Breast epithelium (tissue), 4 donors: ENCODE measurements at regions of chr7 and their contacts with region 1.

Region 1: DNA sequence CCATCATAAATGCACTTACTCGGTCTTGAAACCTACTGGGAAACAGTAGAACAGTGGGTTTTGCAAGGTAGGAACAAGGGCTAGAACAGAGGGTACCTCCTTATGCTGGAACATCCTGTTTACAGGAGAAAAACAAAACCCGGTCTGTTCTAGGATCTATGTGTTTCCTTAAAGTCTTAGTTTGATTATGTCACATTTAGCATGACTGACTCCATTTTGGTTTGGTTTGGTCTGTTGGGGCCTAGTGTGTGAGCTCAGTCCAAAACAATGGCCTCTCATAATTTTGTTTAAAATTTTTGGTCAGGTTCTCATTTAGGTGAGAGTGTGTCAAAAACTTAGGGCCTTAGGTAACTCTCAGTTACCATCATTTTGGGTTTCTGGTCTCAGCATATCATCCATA is 96.3 kb upstream of the TRIM24 start:
- DNase-seq: no peak
- H3K4me3 ChIP-seq: no peak overlapping the region
- H3K27ac ChIP-seq: no peak overlapping the region
- H3K4me1 ChIP-seq: no peaks in the 10 kb centered on the region
- H3K27me3 ChIP-seq: no peaks in the 10 kb centered on the region
- CTCF ChIP-seq: no peak
- POLR2A ChIP-seq: no peak

Region 2: DNA sequence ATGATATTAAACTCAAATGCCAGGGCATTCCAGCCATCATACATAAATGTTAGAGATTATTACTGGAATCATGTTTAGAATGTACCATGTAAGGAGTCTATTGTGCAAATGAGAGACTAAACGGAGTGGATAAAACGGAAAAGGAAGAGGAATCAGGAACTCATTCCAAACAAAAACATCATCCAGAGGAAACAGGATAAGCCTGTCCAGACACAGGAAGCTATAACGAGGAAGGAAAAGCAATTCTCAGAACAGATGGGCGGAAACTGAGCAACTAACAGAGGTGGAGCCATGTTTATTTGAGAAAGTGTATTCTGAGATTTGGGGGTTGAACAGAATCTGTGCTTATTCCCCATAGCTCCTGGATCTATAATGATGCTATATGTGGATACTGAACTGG is 44.1 kb after region 1 on chr7:
- intact Hi-C with region 1: loop called (anchors 2 kb)
- DNase-seq: no peak
- H3K4me3 ChIP-seq: no peak overlapping the region
- H3K27ac ChIP-seq: no peak overlapping the region
- H3K4me1 ChIP-seq: no peaks in the 10 kb centered on the region
- H3K27me3 ChIP-seq: no peaks in the 10 kb centered on the region
- CTCF ChIP-seq: no peak
- POLR2A ChIP-seq: no peak